HCT116 (cell line): ENCODE measurements at regions of chr1 and their contacts with region 1.

Region 1: DNA sequence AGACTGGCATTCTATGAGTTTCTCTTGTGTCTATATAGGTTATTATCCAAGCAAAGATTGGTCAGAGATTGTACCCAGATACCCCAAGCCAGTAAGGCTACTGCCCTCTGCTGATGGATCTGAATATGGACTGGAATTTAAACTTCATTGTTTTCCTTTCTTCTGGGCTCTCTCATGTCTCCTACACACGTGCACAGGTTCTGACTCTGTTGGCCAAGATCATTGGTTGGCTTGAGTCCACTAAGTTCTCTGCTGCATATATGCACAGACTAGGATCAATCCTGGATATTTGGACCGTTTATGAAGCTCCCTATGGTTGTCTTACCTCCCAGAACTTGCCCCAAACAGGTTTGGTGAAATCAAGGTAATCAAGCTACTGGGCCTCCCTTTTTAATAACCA is 69.7 kb downstream of the CC2D1B start:
- DNase-seq: peak; percentile 31
- ATAC-seq: peak; percentile 94
- H3K4me3 ChIP-seq: no peak overlapping the region
- H3K27ac ChIP-seq: no peak overlapping the region
- H3K4me1 ChIP-seq: no peaks in the 10 kb centered on the region
- H3K27me3 ChIP-seq: no peaks in the 10 kb centered on the region
- CTCF ChIP-seq: peak; percentile 69 to 85 (median 77)
- POLR2A ChIP-seq: no peak
- RAD21 ChIP-seq: peak; percentile 90

Region 2: DNA sequence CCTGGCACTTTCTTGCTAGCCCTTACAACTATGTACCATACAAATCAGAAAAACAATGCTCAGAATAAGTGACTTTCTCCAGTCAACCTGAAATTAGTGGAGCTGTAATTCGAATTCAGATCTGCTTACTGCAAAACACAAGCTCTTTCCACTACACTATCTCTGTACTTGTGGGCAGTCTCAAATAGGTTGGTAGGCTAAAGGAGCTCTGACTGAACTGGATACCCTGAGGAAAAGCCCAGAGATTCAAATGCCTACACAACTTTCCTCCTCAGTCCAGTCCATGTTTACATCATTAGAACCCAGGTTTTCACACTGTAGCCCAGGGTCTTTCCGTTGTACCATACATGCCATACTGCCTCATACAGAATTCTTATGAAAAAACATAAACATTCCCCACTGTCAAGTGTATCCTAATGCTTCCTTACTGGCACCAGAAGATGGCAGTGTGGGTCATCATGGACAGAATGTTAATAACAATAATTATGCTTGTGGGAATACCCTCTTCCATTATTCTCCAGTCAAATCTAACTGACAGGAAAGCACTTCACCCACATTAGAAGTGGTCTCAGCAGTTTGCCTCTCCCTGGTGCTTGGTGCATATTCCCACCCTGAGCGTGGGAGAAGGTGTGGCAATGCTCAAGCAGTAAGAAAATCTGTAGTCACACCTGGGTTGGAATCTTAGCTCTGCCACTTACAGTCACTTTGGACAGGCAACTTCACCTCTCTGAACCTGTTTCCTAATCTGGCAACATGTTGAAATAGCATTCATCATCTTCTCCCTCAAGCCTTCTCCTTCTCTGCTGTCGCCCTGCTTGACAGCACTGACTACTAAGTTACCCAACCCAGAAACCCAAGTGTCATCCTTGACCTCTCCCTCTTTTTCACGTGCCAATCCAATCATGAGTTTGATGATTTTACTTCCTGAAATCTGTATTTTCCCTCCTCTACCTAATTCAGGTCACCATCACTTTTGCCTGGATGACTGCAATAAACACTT is 168.9 kb before region 1 on chr1:
- CTCF ChIA-PET with region 1: interaction called, 13 read pairs
- POLR2A ChIA-PET with region 1: no interaction called
- RAD21 ChIA-PET with region 1: interaction called in 1 of 2 experiments, 4 read pairs
- intact Hi-C with region 1: loop called (anchors 2 kb)
- DNase-seq: peak; percentile 57
- ATAC-seq: peak; percentile 98
- H3K4me3 ChIP-seq: no peak overlapping the region
- H3K27ac ChIP-seq: no peak overlapping the region
- H3K4me1 ChIP-seq: no peaks in the 10 kb centered on the region
- H3K27me3 ChIP-seq: no peaks in the 10 kb centered on the region
- CTCF ChIP-seq: peak; percentile 66 to 86 (median 81)
- POLR2A ChIP-seq: no peak
- RAD21 ChIP-seq: peak; percentile 88

Region 3: GRCh38 chr1:52141513-52142219 is 154.7 kb before region 1 on chr1 and contains the start of gene ZFYVE9:
- CTCF ChIA-PET with region 1: no interaction called
- POLR2A ChIA-PET with region 1: no interaction called
- RAD21 ChIA-PET with region 1: no interaction called
- intact Hi-C with region 1: loop called (anchors 5 kb)
- DNase-seq: no peak
- ATAC-seq: peak; percentile 90
- H3K4me3 ChIP-seq: peak within 1 kb of the TSS; percentile 78 to 87
- H3K27ac ChIP-seq: peak within 1 kb of the TSS; percentile 91
- H3K4me1 ChIP-seq: peaks cover 10 to 30% of the 10 kb centered on the region in 2 experiments; a peak in 3 of 4 replicates
- H3K27me3 ChIP-seq: no peaks in the 10 kb centered on the region
- CTCF ChIP-seq: peak; percentile 19 to 54 (median 42); a peak in 5 of 6 replicates
- POLR2A ChIP-seq: peak; percentile 21
- RAD21 ChIP-seq: peak; percentile 58
- total RNA-seq, gene ZFYVE9: 14.2 TPM

Region 4: GRCh38 chr1:52359676-52360594 is 63.6 kb after region 1 on chr1:
- CTCF ChIA-PET with region 1: no interaction called
- POLR2A ChIA-PET with region 1: no interaction called
- RAD21 ChIA-PET with region 1: no interaction called
- intact Hi-C with region 1: no loop called
- DNase-seq: no peak
- ATAC-seq: no peak
- H3K4me3 ChIP-seq: no peak overlapping the region
- H3K27ac ChIP-seq: no peak overlapping the region
- H3K4me1 ChIP-seq: peaks cover 6 to 10% of the 10 kb centered on the region in 2 experiments; a peak in 3 of 4 replicates
- H3K27me3 ChIP-seq: no peaks in the 10 kb centered on the region
- CTCF ChIP-seq: no peak
- POLR2A ChIP-seq: no peak
- RAD21 ChIP-seq: no peak